ENCODE measurements at regions of chr13 and their contacts with region 1.

Region 1: GRCh38 chr13:103531278-103531677 is 465.1 kb upstream of the SLC10A2 start:
- DNase-seq: no peak
- H3K4me3 ChIP-seq: no peak overlapping the region
- H3K27ac ChIP-seq: no peak overlapping the region
- H3K4me1 ChIP-seq: no peaks in the 10 kb centered on the region
- H3K27me3 ChIP-seq: no peaks in the 10 kb centered on the region
- CTCF ChIP-seq: no peak
- EP300 ChIP-seq: no peak
- POLR2A ChIP-seq: no peak

Region 2: DNA sequence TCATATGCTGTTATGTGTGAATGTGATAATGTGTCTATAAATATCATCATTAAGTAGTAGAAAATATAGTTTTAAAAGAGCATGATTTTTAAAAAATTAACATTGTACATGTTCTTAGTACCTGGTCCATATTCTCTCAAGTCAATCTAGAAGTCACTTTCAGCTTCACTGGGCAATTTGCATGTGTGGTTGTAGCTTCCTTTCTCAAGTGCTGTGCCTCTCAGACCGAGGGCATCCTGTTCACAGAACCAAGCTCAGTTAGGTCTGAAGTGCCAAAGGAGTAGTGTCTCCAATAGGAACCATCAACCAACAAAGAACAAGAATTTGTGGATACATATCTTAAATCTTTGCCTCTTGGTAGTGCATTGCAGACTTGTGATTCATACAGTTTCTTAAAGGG is 76.7 kb after region 1 on chr13:
- intact Hi-C with region 1: loop called in 1 of 4 experiments (anchors 5 kb)
- DNase-seq: no peak
- H3K4me3 ChIP-seq: no peak overlapping the region
- H3K27ac ChIP-seq: no peak overlapping the region
- H3K4me1 ChIP-seq: no peaks in the 10 kb centered on the region
- H3K27me3 ChIP-seq: no peaks in the 10 kb centered on the region
- CTCF ChIP-seq: no peak
- EP300 ChIP-seq: no peak
- POLR2A ChIP-seq: no peak

Measured in ovary (tissue), 10 donors.